ENCODE measurements at regions of chr4 and their contacts with region 1.

Region 1: DNA sequence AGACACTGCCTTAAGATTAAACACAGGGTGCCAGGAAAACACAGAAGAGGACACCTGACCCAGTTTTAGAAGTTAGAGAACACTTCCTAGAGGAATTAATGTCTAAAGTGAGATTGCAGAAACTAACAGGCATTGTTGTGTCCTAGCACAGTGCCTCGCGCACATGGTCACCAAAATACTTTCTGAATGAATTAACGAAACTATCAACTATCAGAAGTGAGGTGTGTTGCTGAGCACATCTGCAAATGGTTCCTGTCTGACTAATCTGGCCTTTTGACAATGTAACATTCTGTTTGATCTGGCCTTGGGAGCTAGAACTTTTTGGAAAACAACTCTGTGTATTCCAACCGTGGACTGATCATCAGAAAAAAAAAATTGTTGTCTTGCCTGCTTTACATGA is 556.8 kb upstream of the LCORL start:
- DNase-seq: no peak
- ATAC-seq: no peak
- H3K4me3 ChIP-seq: no peak overlapping the region
- H3K27ac ChIP-seq: no peak overlapping the region
- H3K4me1 ChIP-seq: no peaks in the 10 kb centered on the region
- H3K27me3 ChIP-seq: peaks cover 0 to 20% (median 0%) of the 10 kb centered on the region in 7 donors
- CTCF ChIP-seq: no peak

Region 2: GRCh38 chr4:17552427-17552826 is 1025.9 kb before region 1 on chr4:
- intact Hi-C with region 1: loop called in 1 of 10 experiments (anchors 10 kb)
- DNase-seq: no peak
- ATAC-seq: no peak
- H3K4me3 ChIP-seq: no peak overlapping the region
- H3K27ac ChIP-seq: no peak overlapping the region
- H3K4me1 ChIP-seq: peaks cover 0 to 4% (median 0%) of the 10 kb centered on the region in 9 donors
- H3K27me3 ChIP-seq: peaks cover 0 to 25% (median 4%) of the 10 kb centered on the region in 7 donors
- CTCF ChIP-seq: no peak

Region 3: GRCh38 chr4:17823871-17824669 is 754.2 kb before region 1 on chr4:
- intact Hi-C with region 1: loop called in 1 of 10 experiments (anchors 10 kb)
- DNase-seq: no peak
- ATAC-seq: no peak
- H3K4me3 ChIP-seq: no peak overlapping the region
- H3K27ac ChIP-seq: no peak overlapping the region
- H3K4me1 ChIP-seq: no peaks in the 10 kb centered on the region
- H3K27me3 ChIP-seq: no peaks in the 10 kb centered on the region
- CTCF ChIP-seq: no peak

Region 4: DNA sequence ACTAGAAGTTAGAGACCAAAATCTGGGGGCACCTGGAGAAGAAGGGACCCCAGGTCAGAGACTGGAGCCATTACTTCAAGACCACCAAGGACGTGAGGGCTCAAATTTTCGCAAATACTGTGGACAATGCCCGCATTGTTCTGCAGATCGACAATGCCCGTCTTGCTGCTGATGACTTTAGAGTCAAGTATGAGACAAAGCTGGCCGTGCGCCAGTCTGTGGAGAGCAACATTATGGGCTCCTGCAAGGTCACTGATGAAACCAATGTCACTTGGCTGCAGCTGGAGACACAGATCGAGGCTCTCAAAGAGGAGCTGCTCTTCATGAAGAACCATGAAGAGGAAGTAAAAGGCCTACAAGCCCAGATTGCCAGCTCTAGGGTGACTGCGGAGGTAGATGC is 666.3 kb before region 1 on chr4:
- intact Hi-C with region 1: loop called in 1 of 10 experiments (anchors 5 kb)
- DNase-seq: no peak
- ATAC-seq: no peak
- H3K4me3 ChIP-seq: no peak overlapping the region
- H3K27ac ChIP-seq: no peak overlapping the region
- H3K4me1 ChIP-seq: no peaks in the 10 kb centered on the region
- H3K27me3 ChIP-seq: no peaks in the 10 kb centered on the region
- CTCF ChIP-seq: no peak

Region 5: DNA sequence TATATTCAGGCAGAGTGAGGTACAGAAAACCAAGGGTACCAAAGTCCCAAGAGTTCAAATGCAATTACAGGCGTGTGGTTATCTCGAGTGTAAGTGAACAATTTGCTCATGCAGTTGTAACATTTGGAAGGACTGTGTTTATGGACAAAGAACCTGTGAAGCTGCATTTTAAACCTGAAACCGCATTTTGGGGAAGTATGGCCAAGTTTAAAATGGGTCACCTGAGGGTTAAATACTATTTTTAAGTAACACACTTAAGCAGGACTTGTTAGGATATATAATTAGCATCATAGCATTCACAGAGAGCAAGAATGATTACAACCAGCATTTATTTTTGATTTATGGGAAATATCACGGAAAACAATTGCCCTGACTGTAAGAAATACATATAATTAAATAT is 477.6 kb before region 1 on chr4:
- intact Hi-C with region 1: no loop called
- DNase-seq: no peak
- ATAC-seq: no peak
- H3K4me3 ChIP-seq: no peak overlapping the region
- H3K27ac ChIP-seq: no peak overlapping the region
- H3K4me1 ChIP-seq: peaks cover 0 to 7% (median 0%) of the 10 kb centered on the region in 9 donors
- H3K27me3 ChIP-seq: no peaks in the 10 kb centered on the region
- CTCF ChIP-seq: no peak

Region 6: DNA sequence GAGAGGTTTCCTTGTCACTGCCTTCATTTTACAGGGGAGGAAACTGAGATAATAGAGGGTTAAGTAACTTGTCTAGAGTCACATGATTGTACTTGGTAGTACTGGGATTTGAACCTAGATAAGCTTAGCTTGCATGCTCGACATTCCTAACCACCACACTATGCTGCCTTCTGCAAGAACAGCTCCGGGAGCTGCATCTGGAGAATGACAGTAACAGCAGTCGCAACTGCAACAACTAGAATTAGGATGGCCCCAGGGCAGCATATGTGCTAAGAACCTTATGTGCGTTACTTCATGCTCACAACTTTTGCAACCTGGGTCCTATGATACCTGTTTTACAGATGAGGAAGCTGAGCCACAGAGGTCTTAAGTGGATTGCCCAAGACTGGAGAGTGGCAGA is 467.2 kb before region 1 on chr4:
- intact Hi-C with region 1: no loop called
- DNase-seq: no peak
- ATAC-seq: no peak
- H3K4me3 ChIP-seq: no peak overlapping the region
- H3K27ac ChIP-seq: peak overlapping the region in 1 of 10 donors; percentile 8
- H3K4me1 ChIP-seq: peaks cover 0 to 42% (median 6%) of the 10 kb centered on the region in 9 donors
- H3K27me3 ChIP-seq: peaks cover 0 to 9% (median 0%) of the 10 kb centered on the region in 7 donors
- CTCF ChIP-seq: no peak

Region 7: DNA sequence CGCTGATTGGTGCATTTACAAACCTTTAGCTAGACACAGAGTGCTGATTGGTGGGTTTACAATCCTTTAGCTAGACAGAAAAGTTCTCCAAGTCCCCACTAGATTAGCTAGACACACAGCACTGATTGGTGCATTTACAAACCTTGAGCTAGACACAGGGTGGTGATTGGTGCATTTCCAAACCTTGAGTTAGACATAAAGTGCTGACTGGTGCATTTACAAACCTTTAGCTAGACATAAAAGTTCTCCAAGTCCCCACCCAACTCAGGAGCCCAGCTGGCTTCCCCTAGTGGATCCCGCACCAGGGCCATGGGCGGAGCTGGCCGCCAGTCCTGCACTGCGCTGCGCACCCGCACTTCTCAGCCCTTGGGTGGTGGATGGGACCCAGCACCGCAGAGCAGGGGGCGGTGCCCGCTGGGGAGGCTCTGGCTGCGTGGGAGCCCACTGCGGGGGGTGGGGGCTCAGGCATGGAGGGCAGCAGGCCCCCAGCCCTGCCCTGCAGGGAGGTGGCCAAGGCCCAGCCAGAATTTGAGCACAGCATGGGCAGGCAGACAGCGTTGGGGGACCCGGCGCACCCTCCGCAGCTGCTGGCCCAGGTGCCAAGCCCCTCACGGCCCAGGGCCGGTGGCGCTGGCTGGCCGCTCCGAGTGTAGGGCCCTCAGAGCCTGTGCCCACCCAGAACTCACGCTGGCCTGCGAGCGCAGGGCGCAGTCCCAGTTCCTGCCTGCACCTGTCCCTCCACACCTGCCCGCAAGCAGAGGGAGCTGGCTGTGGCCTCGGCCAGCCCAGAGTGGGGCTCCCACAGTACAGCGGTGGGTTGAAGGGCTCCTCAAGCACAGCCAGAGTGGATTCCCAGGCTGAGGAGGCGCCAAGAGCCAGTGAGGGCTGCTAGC is 52.2 kb after region 1 on chr4:
- intact Hi-C with region 1: no loop called
- DNase-seq: no peak
- ATAC-seq: peak in 1 of 8 donors; percentile 41
- H3K4me3 ChIP-seq: no peak overlapping the region
- H3K27ac ChIP-seq: no peak overlapping the region
- H3K4me1 ChIP-seq: no peaks in the 10 kb centered on the region
- H3K27me3 ChIP-seq: peaks cover 0 to 4% (median 0%) of the 10 kb centered on the region in 7 donors
- CTCF ChIP-seq: no peak